Transverse colon (tissue), 4 donors: ENCODE measurements at regions of chr1 and their contacts with region 1.

Region 1: GRCh38 chr1:37325010-37325409 is 149.4 kb upstream of the ZC3H12A start:
- DNase-seq: no peak
- H3K4me3 ChIP-seq: no peak overlapping the region
- H3K27ac ChIP-seq: no peak overlapping the region
- H3K4me1 ChIP-seq: no peaks in the 10 kb centered on the region
- H3K27me3 ChIP-seq: peaks cover 21% of the 10 kb centered on the region
- CTCF ChIP-seq: no peak
- EP300 ChIP-seq: no peak
- POLR2A ChIP-seq: no peak

Region 2: GRCh38 chr1:38885092-38885491 is 1560.1 kb after region 1 on chr1:
- in situ Hi-C with region 1: no loop called
- intact Hi-C with region 1: loop called (anchors 5 kb)
- DNase-seq: no peak
- H3K4me3 ChIP-seq: no peak overlapping the region
- H3K27ac ChIP-seq: no peak overlapping the region
- H3K4me1 ChIP-seq: no peaks in the 10 kb centered on the region
- H3K27me3 ChIP-seq: no peaks in the 10 kb centered on the region
- CTCF ChIP-seq: no peak
- EP300 ChIP-seq: no peak
- POLR2A ChIP-seq: no peak